Adrenal gland (tissue), 19 donors: ENCODE measurements at regions of chr1 and their contacts with region 1.

Region 1: DNA sequence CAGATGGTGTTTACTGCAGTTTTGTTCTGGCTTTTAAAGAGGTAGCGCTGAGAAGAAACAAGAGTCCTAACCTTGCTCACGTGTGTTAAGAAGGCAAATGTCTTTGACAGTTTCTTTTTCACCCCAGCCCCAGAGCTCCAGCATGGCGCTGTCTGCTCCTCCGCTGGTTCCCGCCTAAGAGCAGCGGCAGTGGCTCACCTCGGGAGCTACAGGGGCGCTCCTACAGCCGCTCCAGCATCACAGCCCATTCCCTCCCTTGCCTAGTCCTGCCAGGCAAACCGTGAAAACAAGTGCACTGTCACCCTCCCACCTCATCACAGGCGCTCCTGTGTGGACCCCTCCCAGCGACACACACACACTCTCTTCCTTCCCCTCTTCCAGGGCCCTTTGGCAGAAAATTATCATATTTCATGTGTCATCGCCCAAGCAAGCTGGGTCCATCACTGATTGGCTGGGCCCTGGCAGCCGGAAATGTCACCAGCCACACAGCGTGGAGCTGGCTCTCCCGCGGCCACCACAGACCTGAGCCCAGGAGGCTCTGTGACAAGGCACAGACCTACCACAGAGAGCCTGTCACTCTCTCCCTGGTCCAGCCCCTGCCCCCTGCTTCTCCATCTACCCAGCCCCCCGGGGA is 1.2 kb upstream of the HIVEP3 start:
- DNase-seq: peak; percentile 26 to 87 (median 35)
- H3K4me3 ChIP-seq: no peak overlapping the region
- H3K27ac ChIP-seq: no peak overlapping the region
- H3K4me1 ChIP-seq: peaks cover 6 to 33% of the 10 kb centered on the region in 2 donors
- H3K27me3 ChIP-seq: no peaks in the 10 kb centered on the region
- CTCF ChIP-seq: no peak
- POLR2A ChIP-seq: no peak

Region 2: DNA sequence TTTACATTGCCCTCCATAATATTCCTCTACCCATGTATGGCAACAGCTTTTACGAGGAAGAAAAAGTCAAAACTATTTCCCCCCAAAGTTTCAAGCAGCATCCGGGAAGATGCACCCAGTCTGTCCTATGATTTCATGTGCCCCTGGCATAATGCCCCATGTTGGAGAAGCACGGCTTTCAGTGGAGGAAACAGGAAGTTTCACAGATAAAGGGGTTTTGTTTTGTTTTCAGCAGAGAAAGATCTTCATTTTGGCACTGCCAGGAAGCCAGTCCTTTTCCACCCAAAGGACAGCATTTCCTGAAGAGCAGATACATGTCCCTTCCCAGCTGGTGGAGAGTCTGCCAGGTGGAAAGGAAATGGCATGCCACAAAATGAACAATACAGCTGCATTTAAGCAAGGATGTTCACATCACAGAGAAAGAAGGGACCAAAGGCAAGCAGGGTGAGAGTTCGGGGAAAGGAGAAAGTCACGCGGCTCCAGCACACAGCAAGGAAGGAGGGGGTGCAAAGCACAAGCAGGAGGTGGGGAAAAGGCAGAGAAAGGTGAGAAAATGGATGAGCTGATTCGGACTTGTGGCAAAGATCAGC is 94.1 kb after region 1 on chr1:
- intact Hi-C with region 1: no loop called
- DNase-seq: peak in 6 of 7 donors; percentile 18 to 65 (median 26)
- H3K4me3 ChIP-seq: no peak overlapping the region
- H3K27ac ChIP-seq: peak overlapping the region in 2 of 5 donors; percentile 12 to 33
- H3K4me1 ChIP-seq: peaks cover 0 to 4% of the 10 kb centered on the region in 2 donors
- H3K27me3 ChIP-seq: no peaks in the 10 kb centered on the region
- CTCF ChIP-seq: no peak
- POLR2A ChIP-seq: no peak

Region 3: DNA sequence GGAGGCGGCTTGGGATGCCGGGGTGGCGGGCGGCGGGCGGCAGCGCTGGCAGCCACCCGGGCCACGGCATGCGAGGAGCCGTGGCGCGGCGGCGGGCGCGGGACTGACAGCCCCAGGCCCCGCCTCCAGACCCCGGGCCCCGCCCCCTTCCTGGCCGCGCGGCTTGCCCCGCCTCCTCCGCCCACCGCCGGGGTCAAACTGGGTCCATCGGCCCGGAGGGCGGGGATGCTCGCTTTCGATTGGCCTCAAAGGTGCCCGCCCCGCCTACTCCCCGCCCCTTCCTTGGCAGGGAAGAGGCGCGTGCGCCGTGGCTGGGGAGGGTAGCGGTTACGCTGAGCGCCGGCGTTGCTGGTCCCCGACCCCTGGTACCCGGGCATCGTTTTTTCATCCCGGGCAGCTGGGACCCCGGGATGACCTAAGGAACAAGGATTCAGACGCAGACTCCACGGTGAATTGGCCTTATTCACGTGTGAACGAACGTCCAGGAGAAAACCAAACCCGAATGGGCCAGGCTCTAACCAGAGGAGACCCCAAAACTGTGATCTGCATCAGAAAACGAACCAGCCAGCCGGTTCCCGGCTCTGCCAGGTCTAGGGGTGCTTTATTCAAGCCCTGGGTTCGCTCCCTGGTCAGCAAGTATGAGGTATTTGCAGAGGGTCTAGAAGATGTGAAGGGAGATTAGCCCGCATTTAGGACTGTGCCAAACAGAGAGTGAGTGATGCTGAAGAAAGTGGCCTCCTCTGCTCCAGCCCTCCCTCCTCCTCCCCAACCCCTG is 116.1 kb after region 1 on chr1:
- intact Hi-C with region 1: loop called in 1 of 2 experiments (anchors 10 kb)
- DNase-seq: peak; percentile 95 to 98 (median 97)
- H3K4me3 ChIP-seq: peak overlapping the region in 2 of 4 donors; percentile 77 to 84
- H3K27ac ChIP-seq: peak overlapping the region in 3 of 5 donors; percentile 14 to 89 (median 71)
- H3K4me1 ChIP-seq: peaks cover 0 to 11% of the 10 kb centered on the region in 2 donors
- H3K27me3 ChIP-seq: no peaks in the 10 kb centered on the region
- CTCF ChIP-seq: no peak
- POLR2A ChIP-seq: no peak

Region 4: DNA sequence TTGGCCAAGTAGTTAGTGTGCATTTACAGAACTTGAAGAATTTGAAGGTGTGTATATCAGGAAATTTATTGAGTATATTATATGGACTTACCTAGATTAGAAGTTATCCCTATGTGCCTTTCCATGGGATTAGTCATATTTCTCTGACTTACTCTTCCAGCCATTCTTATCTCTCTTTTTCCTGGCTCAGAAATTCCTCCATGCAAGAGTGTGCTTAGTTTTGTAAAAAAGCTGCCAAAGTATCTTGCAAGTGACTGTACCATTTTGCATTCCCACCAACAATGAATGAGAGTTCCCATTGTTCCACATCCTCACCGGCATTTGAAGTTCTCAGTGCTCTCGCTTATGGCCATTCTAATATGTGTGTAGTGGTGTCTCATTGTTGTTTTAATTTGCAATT is 151.1 kb after region 1 on chr1:
- intact Hi-C with region 1: no loop called
- DNase-seq: no peak
- H3K4me3 ChIP-seq: no peak overlapping the region
- H3K27ac ChIP-seq: no peak overlapping the region
- H3K4me1 ChIP-seq: no peaks in the 10 kb centered on the region
- H3K27me3 ChIP-seq: no peaks in the 10 kb centered on the region
- CTCF ChIP-seq: no peak
- POLR2A ChIP-seq: no peak